ENCODE measurements at regions of chr2 and their contacts with region 1.

Region 1: DNA sequence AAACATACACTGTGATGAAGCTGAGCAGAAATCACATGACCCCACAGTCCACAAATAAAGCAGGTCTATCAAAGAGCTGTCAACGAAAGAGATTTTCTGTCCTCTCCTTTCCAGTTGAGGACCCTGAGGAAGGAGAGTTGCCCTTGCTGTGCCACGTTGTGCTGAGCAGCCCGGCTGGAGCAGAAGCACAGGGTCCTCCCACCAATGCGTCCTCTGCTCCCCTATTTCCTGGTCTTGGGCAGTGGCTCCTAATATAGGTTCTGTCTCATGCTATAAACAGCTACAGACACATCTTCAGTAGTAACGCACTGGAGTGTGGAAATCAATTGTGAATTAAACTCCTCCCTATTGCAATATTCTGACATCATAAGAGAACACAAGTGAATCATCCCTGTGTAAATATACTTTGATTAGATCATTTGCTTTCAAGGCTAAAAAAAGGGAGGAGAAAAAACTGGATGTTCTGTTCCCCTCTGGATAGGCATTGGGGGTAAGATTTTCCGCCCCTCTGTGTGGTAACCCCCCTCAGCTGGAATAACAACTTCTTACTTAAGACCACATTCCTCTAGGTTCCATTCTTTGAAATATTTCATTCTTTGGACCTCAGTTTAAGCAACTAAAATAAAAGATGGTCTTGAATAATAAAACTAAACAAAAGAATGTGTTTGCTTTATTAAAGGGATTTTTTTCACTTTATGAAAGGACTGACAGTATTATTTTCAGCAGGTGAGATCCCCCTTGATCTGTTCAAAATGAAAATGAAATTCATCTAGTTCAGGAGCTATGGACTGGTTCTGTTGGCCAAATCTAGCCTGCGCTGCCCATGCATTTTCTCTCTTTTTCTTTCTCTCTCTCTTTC is 8.3 kb upstream of the RHOB start:
- DNase-seq: peak; percentile 87
- ATAC-seq: peak; percentile 47
- H3K4me3 ChIP-seq: peak overlapping the region in 2 of 3 experiments; percentile 5 to 30; a peak in 3 of 6 replicates
- H3K27ac ChIP-seq: peak overlapping the region; percentile 43
- H3K4me1 ChIP-seq: peaks cover 53% of the 10 kb centered on the region
- H3K27me3 ChIP-seq: no peaks in the 10 kb centered on the region
- CTCF ChIP-seq: no peak
- EP300 ChIP-seq: peak; percentile 44 to 87; a peak in 3 of 4 replicates
- POLR2A ChIP-seq: no peak
- RAD21 ChIP-seq: no peak

Region 2: GRCh38 chr2:19474128-19474527 is 964.4 kb before region 1 on chr2:
- CTCF ChIA-PET with region 1: no interaction called
- POLR2A ChIA-PET with region 1: no interaction called
- in situ Hi-C with region 1: no loop called
- intact Hi-C with region 1: no loop called
- DNase-seq: no peak
- ATAC-seq: no peak
- H3K4me3 ChIP-seq: no peak overlapping the region
- H3K27ac ChIP-seq: no peak overlapping the region
- H3K4me1 ChIP-seq: peaks cover 6% of the 10 kb centered on the region; the same call in 1 of the 2 replicates
- H3K27me3 ChIP-seq: peaks cover 0 to 11% of the 10 kb centered on the region in 2 experiments; a peak in 1 of 5 replicates
- CTCF ChIP-seq: no peak
- EP300 ChIP-seq: no peak
- POLR2A ChIP-seq: no peak
- RAD21 ChIP-seq: no peak

Region 3: GRCh38 chr2:20411361-20411894 is 27.1 kb before region 1 on chr2:
- CTCF ChIA-PET with region 1: interaction called, 10 read pairs
- POLR2A ChIA-PET with region 1: interaction called, 31 read pairs
- in situ Hi-C with region 1: no loop called
- intact Hi-C with region 1: loop called (anchors 1 kb)
- DNase-seq: peak; percentile 79
- ATAC-seq: peak; percentile 99
- H3K4me3 ChIP-seq: no peak overlapping the region
- H3K27ac ChIP-seq: no peak overlapping the region
- H3K4me1 ChIP-seq: peaks cover 36% of the 10 kb centered on the region
- H3K27me3 ChIP-seq: no peaks in the 10 kb centered on the region; a peak in 1 of 5 replicates
- CTCF ChIP-seq: peak; percentile 97
- EP300 ChIP-seq: no peak
- POLR2A ChIP-seq: no peak
- RAD21 ChIP-seq: peak; percentile 86

Region 4: GRCh38 chr2:20424300-20425290 is 14.0 kb before region 1 on chr2:
- CTCF ChIA-PET with region 1: no interaction called
- POLR2A ChIA-PET with region 1: interaction called, 95 read pairs
- in situ Hi-C with region 1: no loop called
- intact Hi-C with region 1: loop called (anchors 2 kb)
- DNase-seq: no peak
- ATAC-seq: no peak
- H3K4me3 ChIP-seq: peak overlapping the region; percentile 2 to 52 (median 6); a peak in 3 of 6 replicates
- H3K27ac ChIP-seq: no peak overlapping the region
- H3K4me1 ChIP-seq: peaks cover 65% of the 10 kb centered on the region
- H3K27me3 ChIP-seq: peaks cover 1 to 56% of the 10 kb centered on the region in 2 experiments
- CTCF ChIP-seq: no peak
- EP300 ChIP-seq: peak in 1 of 2 experiments; percentile 45; a peak in 2 of 4 replicates
- POLR2A ChIP-seq: no peak
- RAD21 ChIP-seq: no peak

Region 5: DNA sequence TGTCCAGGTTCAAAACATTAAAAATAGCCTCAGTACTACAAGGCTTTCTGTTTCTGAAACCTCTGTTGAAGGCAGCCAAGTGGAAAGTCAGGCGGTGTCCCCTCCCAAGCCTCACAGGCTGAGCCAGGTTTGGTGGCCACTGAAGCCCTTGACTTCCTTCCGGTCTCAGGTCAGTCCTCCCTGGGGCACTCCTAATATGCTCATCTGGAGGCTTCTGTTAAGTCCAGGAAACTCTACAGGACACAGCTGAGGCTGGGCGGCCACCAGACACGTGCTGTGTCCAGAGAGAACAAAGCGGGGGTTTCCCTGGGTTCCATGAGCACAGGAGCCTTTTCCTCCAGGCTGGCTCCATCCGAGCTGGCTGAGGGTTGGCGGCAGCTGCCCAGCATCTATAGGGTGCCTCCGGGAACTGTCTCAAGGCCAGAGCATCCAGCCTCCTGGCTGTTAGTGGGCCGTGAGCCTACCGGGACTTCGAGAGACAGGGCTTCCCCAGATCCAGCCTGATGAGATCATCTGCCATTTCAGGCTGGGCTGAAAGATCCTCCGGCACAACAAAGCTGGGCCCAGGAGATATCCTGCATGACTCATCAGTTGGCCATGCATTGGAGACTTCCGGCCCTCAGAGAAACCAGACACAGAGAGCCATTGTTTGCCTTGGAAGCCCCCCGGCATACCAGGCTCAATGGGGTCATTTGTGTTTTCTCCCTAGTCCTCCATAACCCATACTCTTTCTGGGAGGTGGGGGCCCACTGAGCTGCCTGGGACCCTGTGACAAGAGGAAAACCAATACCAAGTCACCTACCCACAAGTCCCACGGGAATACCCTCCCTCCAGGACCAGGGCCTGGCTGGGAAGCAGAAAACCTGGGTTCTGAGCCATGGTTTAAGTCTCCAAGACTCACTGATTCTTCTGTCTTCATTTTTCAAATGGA is 140.6 kb after region 1 on chr2:
- CTCF ChIA-PET with region 1: no interaction called
- POLR2A ChIA-PET with region 1: interaction called, 1,537 read pairs
- in situ Hi-C with region 1: no loop called
- intact Hi-C with region 1: no loop called
- DNase-seq: peak; percentile 100
- ATAC-seq: peak; percentile 83
- H3K4me3 ChIP-seq: 0 out of 6 replicates have a peak overlapping the region, but pooled peaks of 1 of the 3 experiments have one; percentile 0
- H3K27ac ChIP-seq: peak overlapping the region; percentile 97
- H3K4me1 ChIP-seq: peaks cover 98% of the 10 kb centered on the region
- H3K27me3 ChIP-seq: no peaks in the 10 kb centered on the region
- CTCF ChIP-seq: peak; percentile 21; the same call in 1 of the 2 replicates
- EP300 ChIP-seq: peak; percentile 93 to 98
- POLR2A ChIP-seq: peak in 1 of 2 experiments; percentile 49; a peak in 1 of 4 replicates
- RAD21 ChIP-seq: peak; percentile 75

Region 6: GRCh38 chr2:20595431-20596192 is 157.0 kb after region 1 on chr2:
- CTCF ChIA-PET with region 1: interaction called, 7 read pairs
- POLR2A ChIA-PET with region 1: interaction called, 1,537 read pairs
- in situ Hi-C with region 1: no loop called
- intact Hi-C with region 1: loop called (anchors 1 kb)
- DNase-seq: peak; percentile 66
- ATAC-seq: no peak
- H3K4me3 ChIP-seq: no peak overlapping the region
- H3K27ac ChIP-seq: peak overlapping the region; percentile 97
- H3K4me1 ChIP-seq: peaks cover 98% of the 10 kb centered on the region
- H3K27me3 ChIP-seq: no peaks in the 10 kb centered on the region; a peak in 1 of 5 replicates
- CTCF ChIP-seq: no peak
- EP300 ChIP-seq: peak in 1 of 2 experiments; percentile 62; a peak in 1 of 4 replicates
- POLR2A ChIP-seq: peak in 1 of 2 experiments; percentile 4; a peak in 1 of 4 replicates
- RAD21 ChIP-seq: peak; percentile 33; the same call in 1 of the 2 replicates

Region 7: GRCh38 chr2:20650880-20651730 is 212.5 kb after region 1 on chr2 and contains the start of gene HS1BP3:
- CTCF ChIA-PET with region 1: no interaction called
- POLR2A ChIA-PET with region 1: interaction called, 15 read pairs
- in situ Hi-C with region 1: no loop called
- intact Hi-C with region 1: no loop called
- DNase-seq: peak; percentile 67
- ATAC-seq: peak; percentile 94
- H3K4me3 ChIP-seq: peak within 1 kb of the TSS; percentile 75 to 95 (median 81)
- H3K27ac ChIP-seq: peak within 1 kb of the TSS; percentile 60
- H3K4me1 ChIP-seq: peaks cover 58% of the 10 kb centered on the region
- H3K27me3 ChIP-seq: peaks cover 1 to 12% of the 10 kb centered on the region in 2 experiments; a peak in 4 of 5 replicates
- CTCF ChIP-seq: peak; percentile 89
- EP300 ChIP-seq: 0 out of 4 replicates have a peak, but pooled peaks of 1 of the 2 experiments have one; percentile 11
- POLR2A ChIP-seq: peak in 1 of 2 experiments; percentile 53; a peak in 1 of 4 replicates
- RAD21 ChIP-seq: peak; percentile 98
- total RNA-seq, gene HS1BP3: 22.0 and 22.8 TPM in 2 replicates

Measured in HepG2 (cell line).